Esophagus squamous epithelium (tissue), 5 donors: ENCODE measurements at regions of chr11 and their contacts with region 1.

Region 1: GRCh38 chr11:77820563-77821348 is at the starts of genes AAMDC and RSF1:
- DNase-seq: peak; percentile 95
- H3K4me3 ChIP-seq: peak within 1 kb of the TSS; percentile 70 to 98 (median 92)
- H3K27ac ChIP-seq: peak within 1 kb of the TSS; percentile 94 to 97 (median 96)
- H3K4me1 ChIP-seq: peaks cover 4 to 52% (median 18%) of the 10 kb centered on the region in 3 donors
- H3K27me3 ChIP-seq: no peaks in the 10 kb centered on the region
- CTCF ChIP-seq: peak; percentile 51 to 79 (median 66)
- POLR2A ChIP-seq: peak in 3 of 4 donors; percentile 35 to 65 (median 39)
- total RNA-seq, gene AAMDC: 0.83 to 15.4 (median 2.2) TPM
- total RNA-seq, gene RSF1: 14.7 to 37.8 (median 29.1) TPM

Region 2: DNA sequence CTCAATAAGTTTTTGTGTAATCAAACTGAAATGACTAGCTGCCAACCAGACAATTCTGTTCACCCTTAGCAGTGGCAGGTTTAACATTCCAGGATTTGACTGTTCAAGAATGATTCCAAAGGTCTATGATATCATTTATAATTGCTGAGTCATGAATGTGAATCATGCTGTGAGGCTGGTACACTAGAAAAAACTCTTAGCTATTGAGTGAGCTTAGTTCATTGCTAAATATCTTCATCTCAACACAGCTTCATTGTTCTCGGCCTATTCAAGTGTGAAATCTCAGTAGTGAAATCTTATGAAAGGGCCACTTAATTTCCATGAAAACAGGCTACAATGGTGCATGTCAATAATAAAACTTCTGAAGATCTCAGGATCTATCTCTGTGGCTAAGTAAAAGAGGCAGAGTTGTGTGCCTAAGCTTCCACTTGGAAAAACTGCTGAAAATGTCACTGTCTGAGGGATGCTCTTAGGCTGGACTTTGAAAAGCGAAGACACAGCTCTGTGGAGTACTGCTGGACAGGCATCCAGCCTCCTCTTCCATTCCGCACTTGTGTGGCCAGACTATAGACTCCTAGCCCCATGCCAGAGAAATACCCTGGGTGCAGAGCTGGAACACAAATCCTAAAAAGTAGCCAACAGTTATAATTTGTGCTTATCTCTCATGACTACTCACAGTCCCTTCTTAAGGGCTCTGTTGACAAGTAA is 218.2 kb before region 1 on chr11:
- intact Hi-C with region 1: no loop called
- DNase-seq: no peak
- H3K4me3 ChIP-seq: no peak overlapping the region
- H3K27ac ChIP-seq: peak overlapping the region in 3 of 4 donors; percentile 17 to 29 (median 24)
- H3K4me1 ChIP-seq: peaks cover 4 to 12% (median 7%) of the 10 kb centered on the region in 3 donors
- H3K27me3 ChIP-seq: no peaks in the 10 kb centered on the region
- CTCF ChIP-seq: no peak
- POLR2A ChIP-seq: no peak

Region 3: GRCh38 chr11:77879218-77879617 is 58.5 kb after region 1 on chr11:
- intact Hi-C with region 1: no loop called
- DNase-seq: no peak
- H3K4me3 ChIP-seq: no peak overlapping the region
- H3K27ac ChIP-seq: no peak overlapping the region
- H3K4me1 ChIP-seq: peaks cover 0 to 14% (median 0%) of the 10 kb centered on the region in 3 donors
- H3K27me3 ChIP-seq: no peaks in the 10 kb centered on the region
- CTCF ChIP-seq: peak in 1 of 6 experiments; percentile 9
- POLR2A ChIP-seq: no peak

Region 4: GRCh38 chr11:77994412-77995362 is 173.9 kb after region 1 on chr11 and contains the start of gene INTS4:
- intact Hi-C with region 1: loop called (anchors 5 kb)
- DNase-seq: peak; percentile 96
- H3K4me3 ChIP-seq: peak within 1 kb of the TSS; percentile 59 to 82 (median 66)
- H3K27ac ChIP-seq: peak within 1 kb of the TSS; percentile 76 to 91 (median 86)
- H3K4me1 ChIP-seq: peaks cover 4 to 25% (median 8%) of the 10 kb centered on the region in 3 donors
- H3K27me3 ChIP-seq: no peaks in the 10 kb centered on the region
- CTCF ChIP-seq: peak in 2 of 6 experiments; percentile 15 to 17
- POLR2A ChIP-seq: peak in 1 of 4 donors; percentile 24
- total RNA-seq, gene INTS4: 12.8 to 21.9 (median 17.9) TPM

Region 5: DNA sequence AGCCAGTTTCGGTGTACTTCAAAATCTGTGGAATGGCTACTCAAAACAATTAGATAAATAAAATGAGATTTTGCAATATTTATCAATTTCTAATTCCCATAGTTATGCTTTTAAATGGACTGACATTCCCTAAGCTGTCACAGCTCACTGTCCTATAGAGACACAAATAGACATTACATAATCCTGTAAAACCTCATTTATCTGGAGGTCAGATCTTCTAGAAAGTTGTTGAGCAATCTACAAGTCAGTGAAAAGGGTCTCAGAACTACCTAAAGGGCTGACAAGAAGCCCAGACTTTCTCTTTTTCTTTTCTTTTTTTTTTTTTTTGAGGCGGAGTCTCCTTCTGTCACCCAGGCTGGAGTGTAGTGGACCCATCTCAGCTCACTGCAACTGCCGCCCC is 306.6 kb after region 1 on chr11:
- intact Hi-C with region 1: no loop called
- DNase-seq: no peak
- H3K4me3 ChIP-seq: no peak overlapping the region
- H3K27ac ChIP-seq: no peak overlapping the region
- H3K4me1 ChIP-seq: no peaks in the 10 kb centered on the region
- H3K27me3 ChIP-seq: no peaks in the 10 kb centered on the region
- CTCF ChIP-seq: no peak
- POLR2A ChIP-seq: no peak